Ascending aorta (tissue), 2 donors: ENCODE measurements at regions of chr19 and their contacts with region 1.

Region 1: GRCh38 chr19:42244347-42245220 is 2.2 kb upstream of the GSK3A start:
- DNase-seq: peak; percentile 69 to 97
- H3K4me3 ChIP-seq: peak overlapping the region; percentile 93 to 95
- H3K27ac ChIP-seq: peak overlapping the region; percentile 84 to 97
- H3K4me1 ChIP-seq: peaks cover 16 to 47% of the 10 kb centered on the region in 2 donors
- H3K27me3 ChIP-seq: no peaks in the 10 kb centered on the region
- CTCF ChIP-seq: peak; percentile 65 to 67 (median 66)

Region 2: GRCh38 chr19:41959056-41960053 is 285.2 kb before region 1 on chr19 and contains the start of gene RABAC1:
- intact Hi-C with region 1: loop called (anchors 2 kb)
- DNase-seq: peak; percentile 64 to 95
- H3K4me3 ChIP-seq: peak within 1 kb of the TSS; percentile 83 to 96
- H3K27ac ChIP-seq: peak within 1 kb of the TSS; percentile 92 to 93
- H3K4me1 ChIP-seq: peaks cover 3 to 9% of the 10 kb centered on the region in 2 donors
- H3K27me3 ChIP-seq: no peaks in the 10 kb centered on the region
- CTCF ChIP-seq: no peak
- total RNA-seq, gene RABAC1: 360 TPM

Region 3: GRCh38 chr19:42268704-42269477 is 24.3 kb after region 1 on chr19 and contains the start of gene CIC:
- intact Hi-C with region 1: loop called (anchors 1 kb)
- DNase-seq: peak; percentile 100
- H3K4me3 ChIP-seq: peak within 1 kb of the TSS; percentile 62 to 75
- H3K27ac ChIP-seq: peak within 1 kb of the TSS; percentile 97 to 98
- H3K4me1 ChIP-seq: peaks cover 6 to 20% of the 10 kb centered on the region in 2 donors
- H3K27me3 ChIP-seq: no peaks in the 10 kb centered on the region
- CTCF ChIP-seq: no peak
- total RNA-seq, gene CIC: 247 TPM

Region 4: GRCh38 chr19:42295831-42296525 is 51.4 kb after region 1 on chr19:
- intact Hi-C with region 1: loop called (anchors 1 kb)
- DNase-seq: peak in 1 of 2 donors; percentile 92
- H3K4me3 ChIP-seq: no peak overlapping the region
- H3K27ac ChIP-seq: no peak overlapping the region
- H3K4me1 ChIP-seq: no peaks in the 10 kb centered on the region
- H3K27me3 ChIP-seq: no peaks in the 10 kb centered on the region
- CTCF ChIP-seq: peak; percentile 89 to 96 (median 93)

Region 5: DNA sequence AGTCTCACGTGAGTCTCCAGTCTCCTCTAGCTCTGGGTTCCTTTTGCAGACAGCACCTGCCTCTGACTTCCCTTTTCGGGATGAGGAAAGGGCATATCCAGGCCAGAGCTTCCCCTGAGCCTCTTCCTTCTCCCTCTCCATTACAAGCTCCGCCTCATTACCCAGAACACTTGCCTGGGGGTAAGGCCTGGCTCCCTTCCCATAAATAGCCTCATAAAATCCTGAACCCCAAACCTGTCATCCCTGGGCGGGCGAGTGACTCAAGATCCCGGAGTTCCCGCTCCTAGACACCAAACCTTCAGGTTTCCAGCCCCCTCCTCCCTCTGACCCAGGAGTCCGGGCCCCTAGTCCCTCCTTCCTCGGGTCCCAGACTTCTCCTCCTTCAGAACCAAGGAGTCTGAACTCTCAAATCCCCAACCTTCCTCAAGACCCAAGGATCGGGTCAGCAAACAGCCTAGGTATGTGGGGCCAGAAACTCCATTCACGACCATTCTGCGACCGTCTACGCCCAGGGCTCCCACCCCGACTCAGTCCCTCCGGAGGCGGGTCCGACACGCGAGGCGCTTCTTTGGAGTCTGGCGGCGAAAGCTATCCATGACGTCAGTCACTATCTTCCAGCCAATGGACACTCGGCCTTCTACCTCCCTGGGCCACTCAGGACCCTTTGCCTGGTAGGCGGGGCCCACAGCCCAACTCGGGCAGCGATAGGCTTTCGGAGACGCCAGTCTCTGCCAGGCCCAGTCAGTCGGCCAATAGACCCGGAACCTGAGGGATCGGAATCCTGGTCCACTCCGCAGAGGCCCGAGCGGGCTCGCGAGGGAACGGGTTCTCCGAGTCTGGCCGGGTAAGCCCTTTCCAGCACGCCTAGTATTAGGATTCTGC is 152.0 kb after region 1 on chr19:
- intact Hi-C with region 1: loop called (anchors 1 kb)
- DNase-seq: peak; percentile 98 to 99
- H3K4me3 ChIP-seq: peak overlapping the region; percentile 54 to 68
- H3K27ac ChIP-seq: peak overlapping the region; percentile 70 to 76
- H3K4me1 ChIP-seq: peaks cover 7 to 14% of the 10 kb centered on the region in 2 donors
- H3K27me3 ChIP-seq: no peaks in the 10 kb centered on the region
- CTCF ChIP-seq: no peak

Region 6: GRCh38 chr19:42407085-42407815 is 162.7 kb after region 1 on chr19:
- intact Hi-C with region 1: no loop called
- DNase-seq: no peak
- H3K4me3 ChIP-seq: no peak overlapping the region
- H3K27ac ChIP-seq: no peak overlapping the region
- H3K4me1 ChIP-seq: no peaks in the 10 kb centered on the region
- H3K27me3 ChIP-seq: no peaks in the 10 kb centered on the region
- CTCF ChIP-seq: no peak

Region 7: GRCh38 chr19:42662712-42663111 is 418.1 kb after region 1 on chr19:
- intact Hi-C with region 1: no loop called
- DNase-seq: no peak
- H3K4me3 ChIP-seq: no peak overlapping the region
- H3K27ac ChIP-seq: no peak overlapping the region
- H3K4me1 ChIP-seq: no peaks in the 10 kb centered on the region
- H3K27me3 ChIP-seq: no peaks in the 10 kb centered on the region
- CTCF ChIP-seq: no peak